ENCODE measurements at regions of chr1 and their contacts with region 1.

Region 1: DNA sequence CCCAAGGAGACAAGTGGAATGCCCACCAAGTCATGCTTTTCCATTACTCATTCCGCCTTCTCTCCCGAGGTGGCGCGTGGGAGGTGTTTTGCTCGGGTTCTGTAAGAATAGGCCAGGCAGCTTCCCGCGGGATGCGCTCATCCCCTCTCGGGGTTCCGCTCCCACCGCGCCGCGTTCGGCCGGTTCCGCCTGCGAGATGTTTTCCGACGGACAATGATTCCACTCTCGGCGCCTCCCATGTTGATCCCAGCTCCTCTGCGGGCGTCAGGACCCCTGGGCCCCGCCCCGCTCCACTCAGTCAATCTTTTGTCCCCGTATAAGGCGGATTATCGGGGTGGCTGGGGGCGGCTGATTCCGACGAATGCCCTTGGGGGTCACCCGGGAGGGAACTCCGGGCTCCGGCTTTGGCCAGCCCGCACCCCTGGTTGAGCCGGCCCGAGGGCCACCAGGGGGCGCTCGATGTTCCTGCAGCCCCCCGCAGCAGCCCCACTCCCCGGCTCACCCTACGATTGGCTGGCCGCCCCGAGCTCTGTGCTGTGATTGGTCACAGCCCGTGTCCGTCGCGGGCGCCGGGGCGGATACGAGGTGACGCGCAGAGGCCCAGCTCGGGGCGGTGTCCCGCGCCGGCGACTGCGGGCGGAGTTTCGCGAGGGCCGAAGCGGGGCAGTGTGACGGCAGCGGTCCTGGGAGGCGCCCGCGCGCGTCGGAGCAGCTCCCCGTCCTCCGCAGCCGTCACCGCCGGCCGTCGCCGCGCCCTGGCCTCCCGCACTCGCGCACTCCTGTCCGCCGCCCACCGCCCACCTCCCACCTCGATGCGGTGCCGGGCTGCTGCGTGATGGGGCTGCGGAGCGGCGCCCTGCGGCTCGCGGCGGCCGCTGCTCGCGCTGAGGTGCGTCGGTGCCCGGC is at the start of gene KIF1B:
- DNase-seq: peak; percentile 76
- H3K4me3 ChIP-seq: peak within 1 kb of the TSS; percentile 97
- CTCF ChIP-seq: peak; percentile 95

Region 2: DNA sequence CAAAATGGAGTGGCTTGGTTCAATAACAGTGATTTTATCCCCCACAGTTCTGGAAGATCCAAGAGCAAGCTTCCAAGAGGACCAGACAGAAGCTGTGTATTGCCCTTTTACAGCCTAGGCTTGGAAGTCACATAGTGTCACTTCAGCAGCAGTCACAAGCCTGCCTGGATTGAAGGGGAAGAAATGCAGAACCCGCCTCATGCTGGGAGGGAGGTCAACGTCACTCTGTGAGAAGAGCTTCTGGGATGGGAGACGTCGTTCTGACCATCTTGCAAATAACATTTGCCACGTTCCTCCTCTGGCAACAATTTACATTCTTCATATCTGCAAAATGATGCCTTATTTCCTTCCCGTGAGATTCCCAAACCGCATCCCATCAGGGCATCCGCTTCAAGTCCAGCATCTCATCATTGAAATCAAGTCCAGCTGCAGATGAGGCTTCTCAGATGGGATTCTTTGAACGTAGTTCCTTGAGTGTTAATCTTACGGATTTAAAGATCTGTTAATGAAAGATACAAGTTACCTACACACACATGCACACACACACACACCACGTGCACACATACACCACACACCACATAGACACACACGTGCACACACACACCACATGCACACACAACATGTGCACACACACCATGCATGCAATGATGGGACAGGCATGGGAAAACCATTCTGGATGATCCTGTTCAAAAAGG is 23.7 kb before region 1 on chr1:
- CTCF ChIA-PET with region 1: interaction called, 20 read pairs
- POLR2A ChIA-PET with region 1: interaction called, 4 read pairs
- DNase-seq: no peak
- H3K4me3 ChIP-seq: no peak overlapping the region
- CTCF ChIP-seq: no peak

Region 3: GRCh38 chr1:10225573-10225972 is 15.4 kb after region 1 on chr1:
- CTCF ChIA-PET with region 1: interaction called, 52 read pairs
- POLR2A ChIA-PET with region 1: interaction called, 10 read pairs
- DNase-seq: no peak
- H3K4me3 ChIP-seq: no peak overlapping the region
- CTCF ChIP-seq: no peak

Region 4: GRCh38 chr1:10253755-10254154 is 43.6 kb after region 1 on chr1:
- CTCF ChIA-PET with region 1: interaction called, 25 read pairs
- POLR2A ChIA-PET with region 1: interaction called, 7 read pairs
- DNase-seq: peak; percentile 81
- H3K4me3 ChIP-seq: no peak overlapping the region
- CTCF ChIP-seq: no peak

Region 5: GRCh38 chr1:10283318-10283984 is 73.3 kb after region 1 on chr1:
- CTCF ChIA-PET with region 1: interaction called, 16 read pairs
- POLR2A ChIA-PET with region 1: interaction called, 7 read pairs
- DNase-seq: no peak
- H3K4me3 ChIP-seq: no peak overlapping the region
- CTCF ChIP-seq: no peak

Region 6: GRCh38 chr1:10338047-10338446 is 127.9 kb after region 1 on chr1:
- CTCF ChIA-PET with region 1: interaction called, 64 read pairs
- POLR2A ChIA-PET with region 1: interaction called, 4 read pairs
- DNase-seq: no peak
- H3K4me3 ChIP-seq: no peak overlapping the region
- CTCF ChIP-seq: peak; percentile 81

Measured in AG04449 (cell line).